ENCODE measurements at regions of chr1 and their contacts with region 1.

Region 1: GRCh38 chr1:203597331-203598090 is 29.1 kb upstream of the ATP2B4 start:
- DNase-seq: peak; percentile 68
- H3K4me3 ChIP-seq: peak overlapping the region in 2 of 4 donors; percentile 17 to 19
- H3K27ac ChIP-seq: peak overlapping the region; percentile 59 to 82 (median 75)
- H3K4me1 ChIP-seq: peaks cover 0 to 51% (median 45%) of the 10 kb centered on the region in 4 donors
- H3K27me3 ChIP-seq: no peaks in the 10 kb centered on the region
- CTCF ChIP-seq: no peak
- EP300 ChIP-seq: no peak
- POLR2A ChIP-seq: no peak

Region 2: DNA sequence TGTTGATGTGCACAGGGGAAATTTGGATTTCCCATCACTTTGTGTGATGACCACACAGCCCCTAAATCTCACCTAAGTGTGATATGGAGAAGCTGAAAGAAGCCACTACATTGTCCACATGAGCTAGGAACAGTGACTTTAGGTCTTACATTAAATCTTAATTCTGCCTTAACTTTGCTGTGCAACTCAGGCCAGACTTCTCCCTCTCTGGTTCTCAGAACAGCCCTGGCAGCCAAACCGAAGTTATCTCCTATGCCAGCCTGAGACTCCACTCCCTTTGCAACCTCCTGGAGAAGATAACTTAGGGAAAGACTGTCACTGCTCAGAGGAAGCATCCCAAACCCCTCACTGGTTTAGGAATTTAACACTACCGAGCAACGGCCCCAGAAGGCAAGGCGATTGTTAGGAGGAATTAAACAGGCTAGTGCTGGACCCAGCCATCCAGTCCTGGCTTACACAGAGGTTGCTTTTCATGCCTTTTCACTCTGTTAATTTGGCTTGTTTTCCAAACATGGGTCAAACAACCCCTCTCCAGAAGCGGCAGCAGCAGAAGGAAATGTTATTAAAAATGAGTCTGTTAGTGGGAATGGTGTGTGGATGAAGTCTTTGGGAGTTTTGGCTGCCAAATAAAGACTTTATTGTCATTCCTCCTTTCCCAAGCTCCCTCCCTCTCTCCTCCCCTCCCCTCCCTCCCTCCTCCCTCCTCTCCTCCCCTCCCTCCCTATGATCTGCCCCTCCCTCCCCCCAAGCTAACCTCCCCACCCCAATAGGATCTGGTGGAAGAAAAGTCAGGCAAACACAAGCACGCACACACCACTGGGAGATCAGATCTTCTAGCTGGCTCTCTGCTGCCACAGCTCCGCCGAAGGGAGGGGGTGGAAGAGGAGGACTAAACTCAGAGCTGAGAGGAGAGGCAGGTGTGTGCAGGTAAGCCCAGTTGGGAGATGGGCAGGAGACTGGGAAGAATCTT is 122.2 kb before region 1 on chr1 and contains the start of gene PRELP:
- intact Hi-C with region 1: no loop called
- DNase-seq: peak; percentile 94
- H3K4me3 ChIP-seq: peak within 1 kb of the TSS; percentile 51 to 66 (median 64)
- H3K27ac ChIP-seq: peak within 1 kb of the TSS; percentile 87 to 96 (median 91)
- H3K4me1 ChIP-seq: peaks cover 0 to 45% (median 35%) of the 10 kb centered on the region in 4 donors
- H3K27me3 ChIP-seq: no peaks in the 10 kb centered on the region
- CTCF ChIP-seq: no peak
- EP300 ChIP-seq: no peak
- POLR2A ChIP-seq: peak; percentile 94 to 96
- total RNA-seq, gene PRELP: 45.7 to 133 (median 77.9) TPM

Region 3: DNA sequence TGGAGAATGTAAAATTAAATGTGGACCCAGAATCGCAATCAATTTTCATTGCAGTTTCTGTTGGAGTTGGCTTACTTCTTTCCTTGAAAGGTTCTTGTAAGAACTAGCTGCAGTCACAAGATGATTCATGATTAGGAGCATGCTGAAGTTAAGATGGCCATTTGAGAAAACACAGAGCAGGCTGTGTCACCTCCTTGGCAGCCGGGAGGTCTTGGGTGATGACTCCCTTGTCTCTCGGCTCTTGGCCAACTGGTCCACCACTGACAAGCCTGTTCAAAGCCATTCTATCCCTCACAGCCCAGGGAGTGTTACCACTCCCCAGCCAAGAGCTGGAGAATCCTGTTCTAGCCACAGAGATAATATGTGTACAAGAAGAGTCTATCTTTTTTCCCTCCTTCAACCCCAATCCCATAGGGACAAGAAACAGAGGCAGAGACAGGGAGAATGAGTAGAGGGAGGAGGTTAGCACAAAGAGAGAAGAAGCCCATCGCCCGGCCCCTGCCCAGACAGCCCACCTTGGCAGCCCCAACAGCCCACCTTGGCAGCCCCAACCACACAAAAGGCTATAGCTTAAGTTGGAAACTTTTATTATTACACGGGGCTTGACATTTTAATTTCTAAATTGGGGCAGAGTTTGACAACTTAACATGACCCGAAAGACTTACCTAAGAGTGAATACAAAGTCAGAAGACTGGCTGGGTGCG is 62.8 kb before region 1 on chr1:
- intact Hi-C with region 1: no loop called
- DNase-seq: peak; percentile 98
- H3K4me3 ChIP-seq: no peak overlapping the region
- H3K27ac ChIP-seq: peak overlapping the region; percentile 80 to 97 (median 87)
- H3K4me1 ChIP-seq: peaks cover 0 to 61% (median 49%) of the 10 kb centered on the region in 4 donors
- H3K27me3 ChIP-seq: no peaks in the 10 kb centered on the region
- CTCF ChIP-seq: no peak
- EP300 ChIP-seq: peak; percentile 87 to 96 (median 94)
- POLR2A ChIP-seq: no peak

Region 4: DNA sequence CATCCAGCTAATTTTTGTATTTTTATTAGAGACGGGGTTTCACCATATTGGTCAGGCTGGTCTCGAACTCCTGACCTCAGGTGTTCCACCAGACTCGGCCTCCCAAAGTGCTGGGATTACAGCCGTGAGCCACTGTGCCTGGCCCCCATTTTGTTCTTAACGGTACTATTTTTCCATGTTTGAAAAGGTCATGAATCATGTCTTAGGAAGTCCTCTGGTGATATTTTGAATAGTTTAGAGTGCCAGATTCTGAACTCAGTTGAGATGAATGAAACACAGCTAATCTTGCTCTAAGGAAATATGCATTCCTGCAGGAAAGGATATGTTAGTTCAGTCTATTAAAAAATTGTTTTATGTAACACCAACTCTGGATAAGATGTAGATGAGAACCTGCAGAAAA is 33.5 kb before region 1 on chr1:
- intact Hi-C with region 1: loop called (anchors 5 kb)
- DNase-seq: no peak
- H3K4me3 ChIP-seq: no peak overlapping the region
- H3K27ac ChIP-seq: peak overlapping the region in 2 of 4 donors; percentile 37 to 69
- H3K4me1 ChIP-seq: peaks cover 0 to 16% (median 6%) of the 10 kb centered on the region in 4 donors
- H3K27me3 ChIP-seq: no peaks in the 10 kb centered on the region
- CTCF ChIP-seq: no peak
- EP300 ChIP-seq: no peak
- POLR2A ChIP-seq: no peak

Region 5: DNA sequence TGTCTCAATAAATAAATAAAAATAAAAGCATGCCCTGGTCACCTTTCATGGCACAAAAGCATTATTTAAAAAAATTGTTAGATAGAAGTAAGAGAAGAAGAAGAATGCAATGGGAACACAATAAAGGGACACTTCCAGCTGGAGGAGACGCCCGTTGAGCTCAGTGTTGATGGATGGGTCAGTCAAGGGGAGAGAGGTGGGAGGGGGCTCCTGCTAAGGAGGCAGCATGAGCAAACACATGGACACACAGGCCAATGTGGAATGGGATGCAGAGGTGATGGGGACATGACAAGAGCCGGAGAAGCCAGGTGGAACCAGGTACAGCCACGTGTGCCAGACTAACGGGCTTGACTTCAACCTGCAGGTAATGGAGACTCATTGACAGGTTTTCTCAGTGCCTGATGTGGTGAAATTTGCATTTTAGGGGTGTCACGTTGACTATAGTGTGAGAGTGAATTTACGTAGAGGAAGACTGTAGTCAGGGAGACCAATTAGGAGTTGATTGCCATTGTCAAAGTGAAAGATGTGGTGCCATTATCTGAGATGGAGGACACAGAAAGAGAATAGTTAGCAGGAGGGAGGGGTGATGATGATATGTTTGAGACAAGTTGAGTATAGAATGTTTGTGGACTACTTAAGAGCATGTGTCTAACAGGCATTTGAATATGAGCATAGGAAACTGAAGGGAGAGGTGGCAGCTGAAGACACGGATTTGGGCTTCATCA is 19.6 kb before region 1 on chr1:
- intact Hi-C with region 1: no loop called
- DNase-seq: no peak
- H3K4me3 ChIP-seq: no peak overlapping the region
- H3K27ac ChIP-seq: no peak overlapping the region
- H3K4me1 ChIP-seq: no peaks in the 10 kb centered on the region
- H3K27me3 ChIP-seq: no peaks in the 10 kb centered on the region
- CTCF ChIP-seq: no peak
- EP300 ChIP-seq: no peak
- POLR2A ChIP-seq: no peak

Region 6: DNA sequence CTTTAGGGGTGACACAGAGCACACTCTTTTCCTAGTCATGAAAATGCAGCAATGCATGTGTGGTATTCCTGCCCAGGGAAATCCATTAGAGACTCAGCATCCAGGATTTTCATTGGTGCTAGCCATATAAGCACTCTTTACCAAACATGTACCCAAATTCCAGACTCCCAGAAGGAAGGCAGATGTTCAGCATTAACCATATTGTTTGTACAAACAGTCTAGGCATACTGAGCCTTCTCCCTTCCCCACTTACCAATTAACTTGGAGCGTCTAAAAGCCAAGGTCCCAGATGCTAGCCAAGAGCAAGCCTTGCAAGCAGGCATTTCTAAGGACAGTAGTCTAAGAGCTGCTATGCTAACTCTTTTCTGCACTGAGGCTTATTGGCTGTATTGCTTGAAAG is 225.8 kb after region 1 on chr1:
- intact Hi-C with region 1: no loop called
- DNase-seq: no peak
- H3K4me3 ChIP-seq: no peak overlapping the region
- H3K27ac ChIP-seq: no peak overlapping the region
- H3K4me1 ChIP-seq: peaks cover 0 to 8% (median 2%) of the 10 kb centered on the region in 4 donors
- H3K27me3 ChIP-seq: no peaks in the 10 kb centered on the region
- CTCF ChIP-seq: no peak
- EP300 ChIP-seq: no peak
- POLR2A ChIP-seq: no peak